GM18951 (cell line): ENCODE measurements at regions of chr2 and their contacts with region 1.

Region 1: GRCh38 chr2:230614913-230615332 is 97.7 kb upstream of the CAB39 start:
- POLR2A ChIP-seq: peak; percentile 26

Region 2: DNA sequence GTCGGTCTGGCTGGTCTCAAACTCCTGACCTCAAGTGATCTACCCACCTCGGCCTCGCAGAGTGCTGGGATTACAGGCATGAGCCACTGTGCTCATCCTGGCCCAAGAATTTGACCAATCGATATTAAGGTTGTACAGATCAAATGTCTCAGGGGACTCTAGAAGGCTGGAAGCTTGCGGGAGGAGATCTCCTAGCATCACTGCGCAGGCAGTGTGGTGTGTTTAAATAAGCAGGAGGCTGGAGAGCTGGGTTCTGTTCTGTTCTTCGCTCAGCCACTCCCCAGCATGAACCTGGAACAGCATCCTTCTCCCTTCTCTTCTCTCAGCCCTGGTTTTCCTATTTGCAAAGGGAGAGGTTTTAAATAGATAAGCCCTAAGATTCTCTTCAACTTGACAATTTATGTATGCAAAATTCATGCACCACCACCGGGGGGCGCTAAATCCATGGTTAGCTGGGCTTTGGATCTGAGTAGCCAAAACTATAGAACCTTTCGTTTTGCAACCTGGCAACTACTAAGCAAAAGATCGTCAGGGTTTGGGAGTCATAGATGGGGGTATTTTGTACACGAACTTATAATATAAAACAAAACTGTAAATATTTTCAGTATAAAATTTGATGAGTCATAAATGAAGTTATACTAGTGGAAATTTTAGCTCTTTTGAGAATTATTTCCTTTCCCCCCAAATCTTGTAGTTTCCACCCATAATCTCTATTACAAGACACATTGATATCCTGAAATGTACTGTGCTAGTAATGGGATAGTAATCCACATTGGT is 606.8 kb before region 1 on chr2:
- in situ Hi-C with region 1: loop called (anchors 5 kb)
- POLR2A ChIP-seq: no peak

Region 3: GRCh38 chr2:230383453-230383852 is 231.5 kb before region 1 on chr2:
- in situ Hi-C with region 1: no loop called
- POLR2A ChIP-seq: no peak

Region 4: DNA sequence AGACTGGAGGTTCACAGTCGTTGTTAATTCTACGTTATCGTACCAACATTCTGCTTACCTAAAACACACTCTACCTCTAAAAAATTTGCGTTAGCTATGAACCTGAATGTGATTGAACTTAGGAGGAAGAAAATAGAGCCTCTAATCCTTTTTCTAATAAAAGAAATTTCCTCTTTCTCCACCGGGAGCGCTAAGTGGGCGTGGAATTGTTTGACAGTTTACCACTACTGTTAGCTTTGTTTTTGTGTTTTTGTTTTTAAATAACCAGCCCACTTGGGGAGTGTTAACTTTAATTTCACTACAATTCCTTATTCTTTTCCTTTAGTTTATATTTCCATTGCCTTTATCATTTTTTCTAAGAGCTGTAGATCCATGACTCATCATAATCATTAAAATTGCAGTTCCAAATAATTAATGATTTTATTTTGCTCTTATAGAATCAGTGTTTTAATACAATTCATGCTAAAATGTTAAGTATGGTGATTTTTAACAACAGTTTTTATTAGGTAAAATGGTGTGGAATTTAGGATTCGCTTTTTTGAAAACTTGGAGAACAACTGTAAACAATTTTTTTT is 194.8 kb after region 1 on chr2:
- in situ Hi-C with region 1: loop called (anchors 10 kb)
- POLR2A ChIP-seq: no peak